ENCODE measurements at regions of chr2 and their contacts with region 1.

Region 1: GRCh38 chr2:195937176-195937575 is 131.5 kb downstream of the DNAH7 start:
- DNase-seq: no peak
- ATAC-seq: no peak
- H3K4me3 Mint-ChIP-seq: no peak overlapping the region
- H3K27ac Mint-ChIP-seq: no peak overlapping the region
- H3K4me1 Mint-ChIP-seq: no peaks in the 10 kb centered on the region
- H3K27me3 Mint-ChIP-seq: no peaks in the 10 kb centered on the region
- CTCF ChIP-seq: no peak

Region 2: DNA sequence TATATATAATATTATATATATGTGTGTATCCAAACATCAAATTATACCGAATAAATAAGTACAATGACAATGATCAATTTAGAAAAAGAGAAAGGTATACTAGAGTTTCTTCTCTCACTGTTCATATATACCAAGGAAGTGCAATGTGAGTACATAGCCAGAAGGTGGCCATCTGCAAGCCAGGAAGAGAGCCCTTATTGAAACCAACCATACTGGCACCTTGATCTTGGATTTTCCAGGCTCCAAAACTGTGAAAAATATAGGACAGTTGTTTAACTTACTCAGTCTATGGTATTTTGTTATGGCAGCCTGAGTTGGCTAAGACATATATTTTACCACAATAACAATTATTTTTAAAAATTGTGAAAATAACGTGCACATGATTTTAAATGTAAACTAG is 1770.4 kb before region 1 on chr2:
- CTCF ChIA-PET with region 1: no interaction called
- POLR2A ChIA-PET with region 1: no interaction called
- intact Hi-C with region 1: loop called (anchors 2 kb)
- DNase-seq: no peak
- ATAC-seq: no peak
- H3K4me3 Mint-ChIP-seq: no peak overlapping the region
- H3K27ac Mint-ChIP-seq: no peak overlapping the region
- H3K4me1 Mint-ChIP-seq: no peaks in the 10 kb centered on the region
- H3K27me3 Mint-ChIP-seq: no peaks in the 10 kb centered on the region
- CTCF ChIP-seq: no peak

Region 3: GRCh38 chr2:195270466-195271039 is 666.6 kb before region 1 on chr2:
- CTCF ChIA-PET with region 1: no interaction called
- POLR2A ChIA-PET with region 1: no interaction called
- intact Hi-C with region 1: no loop called
- DNase-seq: no peak
- ATAC-seq: no peak
- H3K4me3 Mint-ChIP-seq: no peak overlapping the region
- H3K27ac Mint-ChIP-seq: no peak overlapping the region
- H3K4me1 Mint-ChIP-seq: no peaks in the 10 kb centered on the region
- H3K27me3 Mint-ChIP-seq: peaks cover 3% of the 10 kb centered on the region
- CTCF ChIP-seq: no peak

Region 4: DNA sequence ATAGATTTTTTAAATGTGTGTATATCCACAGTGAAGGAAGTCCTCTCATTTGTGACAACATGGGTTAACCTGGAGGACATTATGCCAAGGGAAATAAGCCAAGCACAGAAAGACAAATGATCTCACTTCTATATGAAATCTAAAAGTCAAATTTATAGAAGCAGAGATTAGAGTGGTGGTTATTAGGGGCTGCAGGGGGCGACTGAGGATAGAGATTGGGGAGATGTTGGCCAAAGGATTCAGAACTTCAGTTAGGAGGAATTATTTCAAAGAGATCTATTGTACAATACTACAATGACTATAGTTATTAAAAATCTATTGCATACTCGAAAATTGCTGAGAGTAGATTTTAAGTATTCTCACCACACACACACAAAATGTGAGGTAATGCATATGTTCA is 532.5 kb before region 1 on chr2:
- CTCF ChIA-PET with region 1: no interaction called
- POLR2A ChIA-PET with region 1: no interaction called
- intact Hi-C with region 1: loop called (anchors 2 kb)
- DNase-seq: no peak
- ATAC-seq: no peak
- H3K4me3 Mint-ChIP-seq: no peak overlapping the region
- H3K27ac Mint-ChIP-seq: no peak overlapping the region
- H3K4me1 Mint-ChIP-seq: no peaks in the 10 kb centered on the region
- H3K27me3 Mint-ChIP-seq: no peaks in the 10 kb centered on the region
- CTCF ChIP-seq: no peak

Region 5: GRCh38 chr2:195664528-195664927 is 272.6 kb before region 1 on chr2:
- CTCF ChIA-PET with region 1: no interaction called
- POLR2A ChIA-PET with region 1: no interaction called
- intact Hi-C with region 1: loop called (anchors 2 kb)
- DNase-seq: no peak
- ATAC-seq: no peak
- H3K4me3 Mint-ChIP-seq: no peak overlapping the region
- H3K27ac Mint-ChIP-seq: peak overlapping the region; percentile 66
- H3K4me1 Mint-ChIP-seq: peaks cover 60% of the 10 kb centered on the region
- H3K27me3 Mint-ChIP-seq: no peaks in the 10 kb centered on the region
- CTCF ChIP-seq: no peak

Region 6: GRCh38 chr2:196337208-196337953 is 400.2 kb after region 1 on chr2:
- CTCF ChIA-PET with region 1: no interaction called
- POLR2A ChIA-PET with region 1: no interaction called
- intact Hi-C with region 1: loop called (anchors 5 kb)
- DNase-seq: no peak
- ATAC-seq: peak; percentile 53
- H3K4me3 Mint-ChIP-seq: no peak overlapping the region
- H3K27ac Mint-ChIP-seq: peak overlapping the region; percentile 5
- H3K4me1 Mint-ChIP-seq: peaks cover 20% of the 10 kb centered on the region
- H3K27me3 Mint-ChIP-seq: no peaks in the 10 kb centered on the region
- CTCF ChIP-seq: no peak

Region 7: GRCh38 chr2:196399722-196400691 is 462.8 kb after region 1 on chr2:
- CTCF ChIA-PET with region 1: no interaction called
- POLR2A ChIA-PET with region 1: no interaction called
- intact Hi-C with region 1: no loop called
- DNase-seq: no peak
- ATAC-seq: no peak
- H3K4me3 Mint-ChIP-seq: no peak overlapping the region
- H3K27ac Mint-ChIP-seq: no peak overlapping the region
- H3K4me1 Mint-ChIP-seq: no peaks in the 10 kb centered on the region
- H3K27me3 Mint-ChIP-seq: no peaks in the 10 kb centered on the region
- CTCF ChIP-seq: no peak